ENCODE measurements at regions of chr7 and their contacts with region 1.

Region 1: GRCh38 chr7:99408379-99409191 is at the starts of genes BUD31 and PDAP1:
- DNase-seq: peak; percentile 94
- H3K4me3 Mint-ChIP-seq: peak within 1 kb of the TSS; percentile 99
- H3K27ac Mint-ChIP-seq: peak within 1 kb of the TSS; percentile 98
- H3K4me1 Mint-ChIP-seq: peaks cover 23% of the 10 kb centered on the region
- H3K27me3 Mint-ChIP-seq: no peaks in the 10 kb centered on the region
- total RNA-seq, gene BUD31: 123 and 130 TPM in 2 replicates
- total RNA-seq, gene PDAP1: 153 and 159 TPM in 2 replicates

Region 2: GRCh38 chr7:99374103-99375064 is 34.2 kb before region 1 on chr7 and contains the start of gene ARPC1B:
- intact Hi-C with region 1: loop called (anchors 1 kb)
- DNase-seq: peak; percentile 76
- H3K4me3 Mint-ChIP-seq: peak within 1 kb of the TSS; percentile 81
- H3K27ac Mint-ChIP-seq: peak within 1 kb of the TSS; percentile 71
- H3K4me1 Mint-ChIP-seq: peaks cover 24% of the 10 kb centered on the region
- H3K27me3 Mint-ChIP-seq: no peaks in the 10 kb centered on the region
- total RNA-seq, gene ARPC1B: 264 and 265 TPM in 2 replicates

Region 3: DNA sequence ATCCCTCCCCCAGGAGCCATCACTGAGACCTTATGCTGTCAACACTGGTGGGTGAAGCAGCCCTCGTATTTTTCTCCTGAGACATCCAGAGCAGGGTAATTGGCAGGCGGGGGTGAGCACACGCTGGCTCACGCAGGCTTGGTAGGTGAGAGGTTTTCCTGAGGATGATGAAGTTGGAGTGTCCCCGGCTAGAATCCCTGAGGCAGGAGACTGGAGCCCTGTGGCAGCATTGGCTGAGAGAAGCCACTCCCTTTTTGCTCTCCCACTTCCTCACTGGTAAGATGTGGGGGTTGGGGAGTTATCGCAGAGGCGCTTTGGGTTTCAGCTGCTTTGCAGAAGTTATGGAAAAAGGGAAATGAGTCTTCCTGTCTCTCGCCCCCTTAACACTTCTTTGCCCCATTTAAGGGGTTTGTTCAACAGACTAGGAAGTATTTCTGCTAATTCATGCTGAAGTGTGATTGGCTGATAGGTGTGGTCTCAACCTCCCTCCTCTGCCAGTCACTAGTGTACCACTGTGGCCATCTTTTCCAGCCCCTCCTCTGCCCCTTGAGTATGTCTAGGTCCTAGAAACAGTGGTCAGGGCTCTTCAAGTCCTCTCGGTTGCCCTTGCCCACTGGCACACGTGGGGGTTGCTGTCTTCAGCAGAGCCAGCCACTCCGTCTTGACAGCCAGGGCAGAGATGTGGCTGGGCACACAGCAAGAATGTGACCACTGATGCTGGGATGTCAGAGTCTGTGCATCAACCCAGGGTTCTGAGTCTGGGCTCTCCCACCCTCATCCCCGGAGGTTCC is 28.4 kb before region 1 on chr7:
- intact Hi-C with region 1: loop called (anchors 1 kb)
- DNase-seq: no peak
- H3K4me3 Mint-ChIP-seq: peak overlapping the region; percentile 82
- H3K27ac Mint-ChIP-seq: peak overlapping the region; percentile 90
- H3K4me1 Mint-ChIP-seq: peaks cover 40% of the 10 kb centered on the region
- H3K27me3 Mint-ChIP-seq: no peaks in the 10 kb centered on the region

Region 4: DNA sequence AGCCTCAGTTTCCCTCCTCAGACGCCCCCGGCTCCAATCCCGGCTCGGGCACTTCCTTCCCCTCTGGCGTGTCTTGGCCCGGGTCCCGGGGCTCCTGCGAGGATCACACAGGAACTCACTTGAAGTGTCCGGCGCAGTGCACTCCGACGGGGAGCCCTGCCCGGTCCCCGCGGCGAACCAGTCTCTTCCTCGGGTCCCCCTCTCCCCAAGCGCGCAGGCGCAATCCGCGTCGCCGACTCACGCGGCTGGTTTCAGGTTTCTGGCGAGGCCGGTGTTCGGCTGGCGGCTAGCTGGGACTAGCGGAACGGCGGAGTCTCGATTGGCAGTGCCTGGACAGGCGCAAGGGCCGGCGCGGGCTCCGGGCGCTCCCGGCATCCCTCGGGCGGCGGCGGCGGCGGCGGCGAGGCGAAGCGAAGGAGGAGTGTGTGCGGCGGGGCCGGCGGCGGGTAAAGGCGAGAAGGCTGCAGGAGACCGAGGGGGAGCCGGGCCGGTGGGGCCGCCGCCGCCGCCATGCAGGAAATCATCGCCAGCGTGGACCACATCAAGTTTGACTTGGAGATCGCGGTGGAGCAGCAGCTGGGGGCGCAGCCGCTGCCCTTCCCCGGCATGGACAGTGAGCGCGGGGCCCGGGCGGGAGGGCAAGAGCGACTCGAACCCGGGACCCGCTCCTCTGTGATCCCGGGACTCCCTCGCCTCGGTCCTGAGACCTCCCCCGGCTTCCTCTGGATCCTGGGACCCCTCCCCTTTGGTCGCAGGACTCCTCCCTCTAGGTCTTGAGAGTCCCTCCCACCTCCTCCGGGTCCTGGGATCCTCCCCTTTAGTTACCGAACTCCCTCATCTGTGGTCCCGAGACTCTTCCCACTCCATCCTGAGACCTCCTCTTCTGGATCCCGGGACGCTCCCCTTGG is 30.2 kb after region 1 on chr7 and contains the starts of genes CPSF4 and PTCD1:
- intact Hi-C with region 1: loop called (anchors 1 kb)
- DNase-seq: peak; percentile 88
- H3K4me3 Mint-ChIP-seq: peak within 1 kb of the TSS; percentile 99
- H3K27ac Mint-ChIP-seq: peak within 1 kb of the TSS; percentile 92
- H3K4me1 Mint-ChIP-seq: peaks cover 24% of the 10 kb centered on the region
- H3K27me3 Mint-ChIP-seq: no peaks in the 10 kb centered on the region
- total RNA-seq, gene CPSF4: 88.4 and 89.9 TPM in 2 replicates
- total RNA-seq, gene PTCD1: 8.1 and 10.4 TPM in 2 replicates

Region 5: GRCh38 chr7:99472561-99473243 is 64.1 kb after region 1 on chr7 and contains the start of gene ZNF789:
- intact Hi-C with region 1: loop called (anchors 2 kb)
- DNase-seq: peak; percentile 96
- H3K4me3 Mint-ChIP-seq: peak within 1 kb of the TSS; percentile 96
- H3K27ac Mint-ChIP-seq: peak within 1 kb of the TSS; percentile 91
- H3K4me1 Mint-ChIP-seq: peaks cover 20% of the 10 kb centered on the region
- H3K27me3 Mint-ChIP-seq: peaks cover 2% of the 10 kb centered on the region
- total RNA-seq, gene ZNF789: 23.2 and 24.3 TPM in 2 replicates